ENCODE measurements at regions of chr1 and their contacts with region 1.

Region 1: GRCh38 chr1:174999216-174999925 is 376 bp upstream of the CACYBP start:
- DNase-seq: peak; percentile 99
- ATAC-seq: peak; percentile 85
- H3K4me3 Mint-ChIP-seq: no peak overlapping the region
- H3K27ac Mint-ChIP-seq: no peak overlapping the region
- H3K4me1 Mint-ChIP-seq: peaks cover 41% of the 10 kb centered on the region
- H3K27me3 Mint-ChIP-seq: no peaks in the 10 kb centered on the region

Region 2: GRCh38 chr1:173714759-173715537 is 1284.4 kb before region 1 on chr1 and contains the start of gene KLHL20:
- CTCF ChIA-PET with region 1: no interaction called
- POLR2A ChIA-PET with region 1: no interaction called
- intact Hi-C with region 1: loop called in 1 of 2 experiments (anchors 1 kb)
- DNase-seq: peak; percentile 90
- ATAC-seq: peak; percentile 99
- H3K4me3 Mint-ChIP-seq: peak within 1 kb of the TSS; percentile 86
- H3K27ac Mint-ChIP-seq: peak within 1 kb of the TSS; percentile 88
- H3K4me1 Mint-ChIP-seq: peaks cover 24% of the 10 kb centered on the region
- H3K27me3 Mint-ChIP-seq: peaks cover 11% of the 10 kb centered on the region
- total RNA-seq, gene KLHL20: 11.1 to 14.1 TPM

Region 3: GRCh38 chr1:174022080-174022975 is 977.0 kb before region 1 on chr1 and contains the start of gene RC3H1:
- CTCF ChIA-PET with region 1: no interaction called
- POLR2A ChIA-PET with region 1: no interaction called
- intact Hi-C with region 1: loop called in 1 of 2 experiments (anchors 1 kb)
- DNase-seq: peak; percentile 96
- ATAC-seq: peak; percentile 91
- H3K4me3 Mint-ChIP-seq: peak within 1 kb of the TSS; percentile 87
- H3K27ac Mint-ChIP-seq: peak within 1 kb of the TSS; percentile 96
- H3K4me1 Mint-ChIP-seq: peaks cover 31% of the 10 kb centered on the region
- H3K27me3 Mint-ChIP-seq: no peaks in the 10 kb centered on the region
- total RNA-seq, gene RC3H1: 27.3 to 37.0 TPM

Region 4: DNA sequence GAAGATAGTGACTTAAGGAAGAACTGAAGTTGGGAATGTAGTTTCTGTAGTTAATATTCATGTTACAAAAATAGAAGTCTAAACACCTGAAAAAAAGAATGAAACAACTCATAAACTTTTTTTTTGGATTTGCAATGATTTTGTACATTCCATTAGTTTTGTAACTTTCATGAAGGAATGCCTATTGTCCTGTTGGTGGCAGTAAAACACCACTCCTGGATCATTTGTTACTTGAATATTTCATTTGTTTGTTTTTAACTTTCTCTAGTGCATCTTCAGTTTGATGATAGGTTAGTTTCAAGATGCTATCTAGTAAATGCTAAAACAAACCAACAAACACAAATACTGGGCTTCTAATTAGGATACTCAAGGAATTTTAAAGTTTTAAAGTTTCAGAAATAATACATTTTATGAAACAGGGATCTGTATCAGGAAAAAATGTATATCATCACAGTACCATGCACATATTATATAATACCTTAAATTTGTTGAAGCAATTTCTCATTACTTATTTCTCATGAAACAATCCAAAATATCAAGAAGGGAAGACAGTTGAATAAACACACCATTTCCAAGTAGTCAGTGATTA is 229.3 kb before region 1 on chr1:
- CTCF ChIA-PET with region 1: interaction called, 3 read pairs
- POLR2A ChIA-PET with region 1: interaction called, 3 read pairs
- intact Hi-C with region 1: loop called (anchors 1 kb)
- DNase-seq: no peak
- ATAC-seq: no peak
- H3K4me3 Mint-ChIP-seq: no peak overlapping the region
- H3K27ac Mint-ChIP-seq: no peak overlapping the region
- H3K4me1 Mint-ChIP-seq: peaks cover 10% of the 10 kb centered on the region
- H3K27me3 Mint-ChIP-seq: no peaks in the 10 kb centered on the region

Region 5: GRCh38 chr1:174968750-174969244 is 30.6 kb before region 1 on chr1:
- CTCF ChIA-PET with region 1: interaction called, 17 read pairs
- POLR2A ChIA-PET with region 1: interaction called, 10 read pairs
- intact Hi-C with region 1: loop called (anchors 1 kb)
- DNase-seq: peak; percentile 31
- ATAC-seq: peak; percentile 61
- H3K4me3 Mint-ChIP-seq: peak overlapping the region; percentile 24
- H3K27ac Mint-ChIP-seq: peak overlapping the region; percentile 70
- H3K4me1 Mint-ChIP-seq: peaks cover 67% of the 10 kb centered on the region
- H3K27me3 Mint-ChIP-seq: no peaks in the 10 kb centered on the region

Region 6: GRCh38 chr1:175192630-175193526 is 193.5 kb after region 1 on chr1 and contains the start of gene KIAA0040:
- CTCF ChIA-PET with region 1: no interaction called
- POLR2A ChIA-PET with region 1: interaction called, 4 read pairs
- intact Hi-C with region 1: loop called in 1 of 2 experiments (anchors 1 kb)
- DNase-seq: peak; percentile 81
- ATAC-seq: peak; percentile 65
- H3K4me3 Mint-ChIP-seq: peak within 1 kb of the TSS; percentile 99
- H3K27ac Mint-ChIP-seq: peak within 1 kb of the TSS; percentile 93
- H3K4me1 Mint-ChIP-seq: peaks cover 47% of the 10 kb centered on the region
- H3K27me3 Mint-ChIP-seq: no peaks in the 10 kb centered on the region
- total RNA-seq, gene KIAA0040: 25.4 to 26.1 TPM

Measured in activated CD4-positive, alpha-beta T cell treated with anti-CD3 and anti-CD28 coated beads for 36 hours (primary cell).